ENCODE measurements at regions of chr4 and their contacts with region 1.

Region 1: GRCh38 chr4:15805583-15806517 is 27.7 kb downstream of the CD38 start:
- DNase-seq: no peak
- CTCF ChIP-seq: peak; percentile 68

Region 2: DNA sequence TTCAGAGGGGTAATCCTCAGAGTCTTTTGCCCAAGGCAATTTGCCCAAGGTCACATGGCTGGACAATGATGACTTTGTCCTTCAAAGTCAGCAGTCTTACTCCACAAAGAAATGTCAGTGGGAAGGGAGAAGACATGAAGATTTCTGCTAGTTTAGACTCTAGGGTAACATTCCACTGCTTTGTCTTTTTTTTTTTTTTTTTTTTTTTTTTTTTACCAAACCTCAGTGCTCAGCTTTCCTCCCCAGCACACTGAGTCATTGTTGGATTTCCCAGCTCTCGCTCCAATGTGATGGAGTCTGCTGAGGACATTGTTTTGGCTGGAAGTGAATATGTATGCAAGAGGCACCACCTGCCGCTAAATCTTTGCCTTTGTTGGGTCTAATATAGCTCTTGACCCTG is 385.2 kb before region 1 on chr4:
- in situ Hi-C with region 1: no loop called
- DNase-seq: no peak
- CTCF ChIP-seq: no peak

Region 3: DNA sequence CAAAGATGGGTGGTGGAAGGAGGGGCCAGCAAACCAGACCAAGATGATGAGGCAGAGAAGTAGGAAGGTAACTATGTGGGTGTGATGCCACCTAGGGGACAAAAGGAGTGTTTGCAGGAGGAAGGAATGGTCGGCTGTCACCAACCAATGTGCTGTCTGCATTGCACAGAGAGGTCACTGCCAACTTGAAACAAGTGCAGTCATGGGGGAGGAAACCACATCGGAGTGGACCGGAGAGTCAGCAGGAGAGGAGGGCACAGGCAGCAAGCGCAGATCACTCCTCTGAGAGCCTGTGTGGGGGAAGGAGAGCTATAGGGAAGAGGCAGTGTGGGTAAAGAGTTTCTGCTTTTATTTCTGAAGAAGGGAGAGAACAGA is 195.6 kb after region 1 on chr4:
- in situ Hi-C with region 1: loop called (anchors 10 kb)
- DNase-seq: peak; percentile 78
- CTCF ChIP-seq: peak; percentile 72

Measured in GM13976 (cell line).